ENCODE measurements at regions of chr10 and their contacts with region 1.

Region 1: DNA sequence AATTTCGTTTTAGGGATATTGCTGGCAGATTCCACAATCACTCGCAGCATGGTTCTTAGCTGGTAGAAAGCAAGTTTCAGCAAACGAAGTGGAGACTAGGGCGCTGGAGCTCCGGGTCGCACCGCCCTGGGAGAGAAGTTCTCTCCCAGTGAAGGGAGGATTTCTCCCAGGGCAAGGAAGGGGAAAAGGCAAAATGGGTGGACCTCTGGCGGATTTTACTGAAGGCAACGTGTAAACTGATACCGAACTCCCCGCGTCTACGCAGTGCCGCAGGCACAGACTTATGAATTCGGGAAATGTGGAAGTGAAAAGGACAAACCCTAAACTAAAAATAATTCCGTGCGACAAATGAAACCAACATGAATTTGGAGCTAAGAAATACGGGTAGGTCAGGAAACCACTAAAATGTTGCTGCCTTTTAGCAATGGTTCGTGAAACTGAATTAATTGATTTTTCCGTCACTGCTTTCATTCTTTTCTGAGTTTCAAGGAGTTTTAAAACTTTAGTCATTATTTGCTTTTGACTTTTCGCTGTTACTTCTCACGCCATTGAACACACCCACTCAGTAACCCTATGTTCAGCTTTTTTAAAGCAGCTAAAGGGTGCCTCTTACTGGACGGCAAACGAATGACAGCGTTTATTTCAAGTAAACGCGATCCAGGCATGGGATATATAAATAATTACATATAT is at the start of gene MYOF:
- DNase-seq: peak; percentile 49 to 61 (median 53)
- ATAC-seq: peak; percentile 75
- H3K4me3 ChIP-seq: peak within 1 kb of the TSS; percentile 12; the same call in 1 of the 2 replicates
- H3K27ac ChIP-seq: no peak within 1 kb of the TSS
- H3K4me1 ChIP-seq: no peaks in the 10 kb centered on the region
- H3K27me3 ChIP-seq: peaks cover 0 to 10% of the 10 kb centered on the region in 2 experiments; a peak in 3 of 5 replicates
- CTCF ChIP-seq: peak in 2 of 3 experiments; percentile 53 to 69; a peak in 3 of 6 replicates
- EP300 ChIP-seq: no peak
- POLR2A ChIP-seq: no peak
- RAD21 ChIP-seq: peak; percentile 72
- polyA plus RNA-seq, gene MYOF: not detected

Region 2: DNA sequence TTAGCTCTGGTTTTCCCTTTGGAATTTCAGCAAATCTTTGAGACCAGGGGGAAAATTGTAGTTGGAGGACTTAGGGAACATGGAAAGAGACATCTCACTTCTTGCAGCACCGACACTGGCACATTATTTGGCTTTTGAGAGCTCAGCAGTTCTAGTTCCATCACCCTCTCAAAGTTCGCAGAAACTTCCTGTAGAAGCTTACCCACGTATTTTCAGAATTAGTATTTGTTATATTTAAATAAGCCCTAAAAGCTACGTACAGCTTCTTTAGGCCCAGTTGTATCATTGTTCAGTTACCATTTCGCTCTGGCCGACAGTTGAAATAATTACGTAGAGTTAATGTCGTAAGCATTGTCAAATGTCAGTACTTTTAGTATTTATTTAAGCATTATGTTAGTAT is 27.5 kb after region 1 on chr10:
- CTCF ChIA-PET with region 1: interaction called, 3 read pairs
- POLR2A ChIA-PET with region 1: no interaction called
- in situ Hi-C with region 1: no loop called
- intact Hi-C with region 1: loop called (anchors 2 kb)
- DNase-seq: no peak
- ATAC-seq: no peak
- H3K4me3 ChIP-seq: no peak overlapping the region
- H3K27ac ChIP-seq: no peak overlapping the region
- H3K4me1 ChIP-seq: no peaks in the 10 kb centered on the region
- H3K27me3 ChIP-seq: no peaks in the 10 kb centered on the region
- CTCF ChIP-seq: no peak
- EP300 ChIP-seq: no peak
- POLR2A ChIP-seq: no peak
- RAD21 ChIP-seq: no peak

Region 3: GRCh38 chr10:93566435-93567276 is 84.4 kb after region 1 on chr10 and contains the start of gene FFAR4:
- CTCF ChIA-PET with region 1: no interaction called
- POLR2A ChIA-PET with region 1: no interaction called
- in situ Hi-C with region 1: no loop called
- intact Hi-C with region 1: no loop called
- DNase-seq: no peak
- ATAC-seq: no peak
- H3K4me3 ChIP-seq: no peak within 1 kb of the TSS
- H3K27ac ChIP-seq: no peak within 1 kb of the TSS
- H3K4me1 ChIP-seq: peaks cover 0 to 7% of the 10 kb centered on the region in 2 experiments; a peak in 2 of 5 replicates
- H3K27me3 ChIP-seq: peaks cover 7 to 39% of the 10 kb centered on the region in 2 experiments; a peak in 4 of 5 replicates
- CTCF ChIP-seq: no peak
- EP300 ChIP-seq: no peak
- POLR2A ChIP-seq: no peak
- RAD21 ChIP-seq: no peak
- polyA plus RNA-seq, gene FFAR4: not detected